WTC11 (cell line): ENCODE measurements at regions of chr13 and their contacts with region 1.

Region 1: GRCh38 chr13:95403828-95404522 is 102.7 kb upstream of the ABCC4 start:
- DNase-seq: peak; percentile 90
- ATAC-seq: peak; percentile 91
- H3K4me3 Mint-ChIP-seq: peak overlapping the region; percentile 74
- H3K27ac Mint-ChIP-seq: peak overlapping the region; percentile 43
- H3K4me1 Mint-ChIP-seq: peaks cover 5% of the 10 kb centered on the region
- H3K27me3 Mint-ChIP-seq: no peaks in the 10 kb centered on the region; the same call in 1 of the 2 replicates
- CTCF ChIP-seq: peak; percentile 85

Region 2: GRCh38 chr13:95073599-95074311 is 330.2 kb before region 1 on chr13:
- CTCF ChIA-PET with region 1: no interaction called
- POLR2A ChIA-PET with region 1: no interaction called
- DNase-seq: no peak
- ATAC-seq: no peak
- H3K4me3 Mint-ChIP-seq: no peak overlapping the region
- H3K27ac Mint-ChIP-seq: no peak overlapping the region
- H3K4me1 Mint-ChIP-seq: no peaks in the 10 kb centered on the region
- H3K27me3 Mint-ChIP-seq: no peaks in the 10 kb centered on the region
- CTCF ChIP-seq: no peak

Region 3: GRCh38 chr13:95201814-95202651 is 201.9 kb before region 1 on chr13:
- CTCF ChIA-PET with region 1: interaction called, 14 read pairs
- POLR2A ChIA-PET with region 1: no interaction called
- DNase-seq: no peak
- ATAC-seq: no peak
- H3K4me3 Mint-ChIP-seq: no peak overlapping the region
- H3K27ac Mint-ChIP-seq: no peak overlapping the region
- H3K4me1 Mint-ChIP-seq: 0 out of 2 replicates have a peak, but pooled peaks cover 3% of the 10 kb centered on the region
- H3K27me3 Mint-ChIP-seq: no peaks in the 10 kb centered on the region
- CTCF ChIP-seq: no peak

Region 4: GRCh38 chr13:95378603-95379002 is 25.4 kb before region 1 on chr13:
- CTCF ChIA-PET with region 1: interaction called, 72 read pairs
- POLR2A ChIA-PET with region 1: no interaction called
- DNase-seq: no peak
- ATAC-seq: no peak
- H3K4me3 Mint-ChIP-seq: no peak overlapping the region
- H3K27ac Mint-ChIP-seq: no peak overlapping the region
- H3K4me1 Mint-ChIP-seq: peaks cover 6% of the 10 kb centered on the region
- H3K27me3 Mint-ChIP-seq: no peaks in the 10 kb centered on the region
- CTCF ChIP-seq: no peak

Region 5: GRCh38 chr13:95420501-95420900 is 16.5 kb after region 1 on chr13:
- CTCF ChIA-PET with region 1: interaction called, 17 read pairs
- POLR2A ChIA-PET with region 1: no interaction called
- DNase-seq: peak; percentile 15
- ATAC-seq: peak; percentile 62
- H3K4me3 Mint-ChIP-seq: no peak overlapping the region
- H3K27ac Mint-ChIP-seq: no peak overlapping the region
- H3K4me1 Mint-ChIP-seq: no peaks in the 10 kb centered on the region
- H3K27me3 Mint-ChIP-seq: peaks cover 2% of the 10 kb centered on the region; the same call in 1 of the 2 replicates
- CTCF ChIP-seq: no peak

Region 6: GRCh38 chr13:95480131-95480545 is 76.2 kb after region 1 on chr13:
- CTCF ChIA-PET with region 1: interaction called, 17 read pairs
- POLR2A ChIA-PET with region 1: no interaction called
- DNase-seq: no peak
- ATAC-seq: no peak
- H3K4me3 Mint-ChIP-seq: no peak overlapping the region
- H3K27ac Mint-ChIP-seq: no peak overlapping the region
- H3K4me1 Mint-ChIP-seq: peaks cover 1% of the 10 kb centered on the region
- H3K27me3 Mint-ChIP-seq: no peaks in the 10 kb centered on the region; the same call in 1 of the 2 replicates
- CTCF ChIP-seq: no peak